Mammary epithelial cell (primary cell): ENCODE measurements at regions of chr7 and their contacts with region 1.

Region 1: DNA sequence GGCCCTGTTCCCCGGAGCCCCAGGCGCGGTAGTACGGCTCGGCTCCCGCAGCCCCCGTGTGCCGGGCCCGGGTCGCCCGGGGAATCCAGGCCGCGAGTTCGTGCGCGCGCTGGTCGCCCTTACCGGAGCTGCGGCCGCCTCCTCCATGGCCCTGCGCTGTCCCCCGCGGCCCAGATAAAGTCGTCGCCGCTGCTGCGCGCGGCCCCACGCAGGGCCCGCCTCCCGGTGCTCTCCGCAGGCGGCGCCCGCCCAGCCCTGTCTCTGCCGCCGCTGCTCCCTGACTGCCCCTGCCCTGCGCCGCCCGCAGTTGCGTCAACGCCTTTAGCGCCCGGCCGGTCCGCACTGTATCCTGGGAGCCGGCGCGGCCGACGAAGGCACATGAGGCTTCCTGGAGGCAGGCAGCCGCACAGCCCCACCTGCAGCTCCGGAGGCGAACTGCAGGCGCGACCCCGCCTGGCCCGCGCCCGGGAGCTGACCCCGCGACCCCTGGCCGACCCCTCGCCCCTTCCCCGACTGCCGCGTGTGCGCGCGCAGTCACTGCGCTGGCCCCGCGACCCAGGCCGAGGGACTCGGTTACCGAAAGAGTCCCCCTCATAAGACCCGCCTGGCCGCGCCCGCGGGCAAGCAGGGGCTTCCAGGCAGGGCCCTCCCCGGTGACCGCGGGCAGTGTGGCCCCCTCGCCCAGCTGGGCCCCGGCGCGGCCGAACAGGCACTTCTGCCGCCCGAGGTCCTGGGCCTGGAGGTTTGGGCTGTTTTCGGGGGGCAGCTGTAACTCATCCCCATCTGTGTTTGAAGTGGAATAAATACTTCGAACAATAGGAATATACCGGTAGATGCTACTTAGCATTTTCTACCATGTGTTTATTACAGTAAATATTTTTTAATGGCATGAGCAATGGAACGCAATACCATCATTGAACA is 127.1 kb upstream of the ZNF746 start:
- DNase-seq: peak; percentile 92
- H3K4me3 ChIP-seq: peak overlapping the region; percentile 63 to 78 (median 69)
- H3K27ac ChIP-seq: peak overlapping the region; percentile 45
- H3K4me1 ChIP-seq: peaks cover 19% of the 10 kb centered on the region
- H3K27me3 ChIP-seq: no peaks in the 10 kb centered on the region
- CTCF ChIP-seq: peak; percentile 58 to 83

Region 2: GRCh38 chr7:149422129-149422913 is 202.4 kb before region 1 on chr7:
- CTCF ChIA-PET with region 1: no interaction called
- dilution Hi-C with region 1: no loop called
- in situ Hi-C with region 1: no loop called
- intact Hi-C with region 1: loop called (anchors 2 kb)
- DNase-seq: peak; percentile 64
- H3K4me3 ChIP-seq: peak overlapping the region; percentile 47 to 56 (median 50)
- H3K27ac ChIP-seq: no peak overlapping the region
- H3K4me1 ChIP-seq: peaks cover 4% of the 10 kb centered on the region
- H3K27me3 ChIP-seq: no peaks in the 10 kb centered on the region
- CTCF ChIP-seq: peak; percentile 49 to 66

Region 3: DNA sequence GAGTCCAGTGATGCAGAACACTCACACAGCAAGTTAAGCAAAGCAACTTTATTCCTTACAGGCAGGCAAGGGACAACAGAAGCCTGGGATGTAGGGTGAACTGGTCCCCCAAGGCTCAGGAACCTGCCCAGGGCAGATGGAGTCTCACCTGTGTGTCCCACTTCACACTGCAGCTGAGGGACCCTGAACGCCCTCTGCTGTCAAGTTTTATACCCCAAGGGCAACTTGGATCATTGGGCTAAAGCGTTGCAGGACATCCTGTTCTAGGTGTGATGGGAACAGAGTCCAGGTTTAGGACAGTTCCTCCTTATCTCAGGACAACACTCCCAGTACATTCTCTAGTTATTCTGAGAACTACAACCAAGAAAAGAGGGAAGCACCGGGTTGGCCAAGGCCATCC is 77.6 kb before region 1 on chr7:
- CTCF ChIA-PET with region 1: no interaction called
- dilution Hi-C with region 1: no loop called
- in situ Hi-C with region 1: no loop called
- intact Hi-C with region 1: no loop called
- DNase-seq: no peak
- H3K4me3 ChIP-seq: no peak overlapping the region
- H3K27ac ChIP-seq: no peak overlapping the region
- H3K4me1 ChIP-seq: peaks cover 5% of the 10 kb centered on the region
- H3K27me3 ChIP-seq: no peaks in the 10 kb centered on the region
- CTCF ChIP-seq: no peak

Region 4: DNA sequence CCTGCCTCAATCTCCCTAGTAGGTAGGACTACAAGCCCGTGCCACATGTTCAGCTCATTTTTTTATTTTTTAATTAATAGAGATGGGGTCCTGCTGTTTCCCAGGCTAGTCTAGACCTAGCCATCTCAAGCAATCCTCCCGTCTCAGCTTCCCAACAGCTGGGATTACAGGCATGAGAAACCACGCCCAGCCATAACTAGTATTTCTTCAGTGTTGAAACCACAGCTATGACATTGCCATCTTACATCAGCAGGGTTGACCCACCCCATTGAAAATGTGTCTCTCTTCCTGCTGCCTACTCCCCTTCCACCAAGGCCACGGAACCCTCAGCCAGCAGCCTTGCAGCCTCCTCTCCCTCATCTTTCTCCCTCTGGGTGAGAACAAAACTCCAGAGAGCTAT is 65.0 kb before region 1 on chr7:
- CTCF ChIA-PET with region 1: interaction called, 3 read pairs
- dilution Hi-C with region 1: no loop called
- in situ Hi-C with region 1: no loop called
- intact Hi-C with region 1: loop called (anchors 2 kb)
- DNase-seq: peak; percentile 45
- H3K4me3 ChIP-seq: no peak overlapping the region
- H3K27ac ChIP-seq: peak overlapping the region; percentile 55
- H3K4me1 ChIP-seq: peaks cover 41% of the 10 kb centered on the region
- H3K27me3 ChIP-seq: no peaks in the 10 kb centered on the region
- CTCF ChIP-seq: no peak

Region 5: DNA sequence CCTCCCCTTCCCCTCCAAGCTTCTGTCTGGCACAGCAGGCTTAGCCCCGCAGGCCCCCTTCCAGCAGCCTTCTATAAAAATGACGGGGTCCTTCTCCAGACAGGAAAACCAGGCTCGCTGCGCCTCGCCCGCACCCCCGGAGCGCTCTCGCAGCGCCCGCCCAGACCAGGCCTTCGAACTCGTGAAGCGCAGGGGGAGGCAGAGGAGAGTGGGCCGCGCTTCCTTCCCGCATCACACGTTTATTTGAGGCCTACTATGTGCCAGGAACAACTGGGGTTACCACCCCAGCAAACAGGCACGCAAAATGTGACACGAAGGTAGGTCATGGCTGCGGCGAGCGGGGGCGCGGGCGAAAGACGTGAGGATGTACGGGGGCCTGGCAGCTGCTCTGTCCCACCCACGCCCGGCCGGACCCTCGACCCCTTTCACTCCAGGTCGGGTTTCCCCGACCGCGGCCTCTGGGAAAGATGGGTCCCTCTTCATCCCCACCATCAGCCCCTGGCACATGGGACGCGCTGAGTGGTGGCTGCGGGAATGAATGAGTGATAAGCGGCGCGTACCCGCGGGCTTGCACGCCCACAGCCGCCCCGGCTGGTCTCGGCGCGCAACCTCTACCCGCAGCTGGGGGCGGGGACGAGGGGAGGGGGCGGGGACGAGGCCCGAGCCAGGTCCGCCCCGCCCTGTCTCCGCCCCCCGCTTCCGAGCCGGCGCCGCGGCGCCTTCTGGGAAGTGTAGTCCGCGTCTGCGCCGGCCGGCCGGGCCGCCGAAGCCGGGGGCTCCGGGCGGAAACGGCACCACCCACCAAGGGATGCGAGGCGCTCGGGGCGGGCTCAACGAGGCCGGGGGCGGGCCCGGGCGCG is 89.6 kb after region 1 on chr7:
- CTCF ChIA-PET with region 1: no interaction called
- dilution Hi-C with region 1: no loop called
- in situ Hi-C with region 1: no loop called
- intact Hi-C with region 1: loop called (anchors 2 kb)
- DNase-seq: peak; percentile 84
- H3K4me3 ChIP-seq: peak overlapping the region; percentile 70 to 80 (median 74)
- H3K27ac ChIP-seq: no peak overlapping the region
- H3K4me1 ChIP-seq: peaks cover 32% of the 10 kb centered on the region
- H3K27me3 ChIP-seq: no peaks in the 10 kb centered on the region
- CTCF ChIP-seq: no peak